ENCODE measurements at regions of chr6 and their contacts with region 1.

Region 1: GRCh38 chr6:138115877-138116660 is 8.8 kb upstream of the PERP start:
- DNase-seq: no peak
- H3K4me3 Mint-ChIP-seq: no peak overlapping the region
- H3K27ac Mint-ChIP-seq: no peak overlapping the region
- H3K4me1 Mint-ChIP-seq: peaks cover 6% of the 10 kb centered on the region
- H3K27me3 Mint-ChIP-seq: peaks cover 38% of the 10 kb centered on the region

Region 2: DNA sequence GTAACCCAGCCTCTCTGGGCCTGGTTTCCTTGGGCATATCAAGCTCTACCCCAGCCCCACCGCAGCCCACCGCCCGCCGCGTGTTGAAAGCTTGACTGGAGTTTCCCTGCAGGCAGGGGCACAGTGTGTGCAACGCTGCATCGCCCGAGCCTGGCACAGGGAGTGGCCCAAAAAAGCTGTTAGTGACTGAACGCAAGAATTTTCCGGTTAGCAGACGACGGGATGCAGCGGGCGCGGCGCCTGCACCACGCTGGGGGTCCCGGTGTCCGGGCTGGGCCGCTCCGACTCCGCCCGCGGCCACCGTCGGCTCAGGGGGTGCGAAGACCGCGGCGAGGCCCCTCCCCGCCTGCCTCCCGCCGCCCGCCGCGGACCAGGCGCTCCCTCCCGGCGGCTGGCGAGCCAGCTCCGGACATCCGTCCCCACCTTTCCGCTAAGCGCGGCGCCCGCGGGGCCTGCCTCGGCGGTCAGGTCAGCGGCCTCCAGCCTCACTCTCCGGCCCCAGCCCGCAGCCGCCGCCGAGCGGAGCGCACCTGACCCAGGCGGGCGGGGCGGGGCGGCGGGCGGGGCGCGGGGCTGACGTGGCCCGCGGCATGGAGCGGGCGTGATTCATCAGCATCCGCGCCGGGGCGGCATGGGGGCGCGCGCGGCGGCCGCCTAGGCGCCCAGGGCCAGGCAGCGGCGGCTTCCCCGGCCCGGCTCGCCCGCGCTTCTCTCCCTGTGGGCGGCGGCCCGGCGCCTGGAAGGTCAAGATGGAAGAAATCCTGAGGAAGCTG is 45.5 kb after region 1 on chr6 and contains the start of gene ARFGEF3:
- intact Hi-C with region 1: loop called (anchors 2 kb)
- DNase-seq: peak; percentile 28
- H3K4me3 Mint-ChIP-seq: peak within 1 kb of the TSS; percentile 62
- H3K27ac Mint-ChIP-seq: no peak within 1 kb of the TSS
- H3K4me1 Mint-ChIP-seq: peaks cover 12% of the 10 kb centered on the region
- H3K27me3 Mint-ChIP-seq: peaks cover 58% of the 10 kb centered on the region
- total RNA-seq, gene ARFGEF3: 0.48 and 0.55 TPM in 2 replicates

Region 3: GRCh38 chr6:138287144-138287955 is 171.3 kb after region 1 on chr6:
- intact Hi-C with region 1: loop called (anchors 1 kb)
- DNase-seq: no peak
- H3K4me3 Mint-ChIP-seq: no peak overlapping the region
- H3K27ac Mint-ChIP-seq: no peak overlapping the region
- H3K4me1 Mint-ChIP-seq: peaks cover 1% of the 10 kb centered on the region
- H3K27me3 Mint-ChIP-seq: no peaks in the 10 kb centered on the region

Region 4: GRCh38 chr6:138403801-138404661 is 288.0 kb after region 1 on chr6 and contains the start of gene HEBP2:
- intact Hi-C with region 1: loop called (anchors 10 kb)
- DNase-seq: peak; percentile 84
- H3K4me3 Mint-ChIP-seq: peak within 1 kb of the TSS; percentile 77
- H3K27ac Mint-ChIP-seq: peak within 1 kb of the TSS; percentile 26
- H3K4me1 Mint-ChIP-seq: peaks cover 18% of the 10 kb centered on the region
- H3K27me3 Mint-ChIP-seq: peaks cover 13% of the 10 kb centered on the region
- total RNA-seq, gene HEBP2: 17.2 and 20.0 TPM in 2 replicates

Region 5: DNA sequence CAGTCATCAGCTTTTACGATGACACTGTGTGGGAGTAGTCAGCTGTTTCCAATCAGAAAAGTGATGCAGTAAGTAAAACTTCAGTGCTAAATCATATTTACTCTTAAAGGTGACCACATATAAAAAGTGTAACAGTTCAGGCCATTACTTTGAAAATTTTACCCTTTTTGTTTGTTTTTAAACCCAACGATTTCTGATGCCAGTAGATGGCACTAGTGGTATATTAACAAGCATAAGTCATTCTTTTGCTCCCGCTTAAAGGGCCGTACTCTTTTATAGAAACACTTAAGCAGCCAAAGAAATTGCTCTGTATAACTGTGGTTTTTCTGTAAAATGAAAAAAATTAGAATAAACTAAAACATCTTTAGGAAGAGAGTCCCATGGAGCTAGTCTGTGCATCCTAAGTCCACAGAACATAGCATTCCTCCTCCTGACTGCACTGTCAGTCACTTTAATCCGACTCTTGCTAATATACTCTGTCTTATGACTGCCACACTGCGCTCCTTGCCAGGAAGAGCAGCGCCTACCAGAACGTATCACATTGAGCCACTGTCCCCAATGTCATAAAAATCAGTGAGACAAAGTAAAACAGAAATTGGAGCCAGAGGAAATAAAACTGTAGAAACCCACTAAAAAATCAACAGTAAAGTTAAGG is 313.0 kb after region 1 on chr6:
- intact Hi-C with region 1: loop called (anchors 2 kb)
- DNase-seq: no peak
- H3K4me3 Mint-ChIP-seq: no peak overlapping the region
- H3K27ac Mint-ChIP-seq: no peak overlapping the region
- H3K4me1 Mint-ChIP-seq: no peaks in the 10 kb centered on the region
- H3K27me3 Mint-ChIP-seq: peaks cover 3% of the 10 kb centered on the region

Region 6: GRCh38 chr6:138517635-138518034 is 401.6 kb after region 1 on chr6:
- intact Hi-C with region 1: loop called (anchors 2 kb)
- DNase-seq: peak; percentile 42
- H3K4me3 Mint-ChIP-seq: no peak overlapping the region
- H3K27ac Mint-ChIP-seq: no peak overlapping the region
- H3K4me1 Mint-ChIP-seq: peaks cover 22% of the 10 kb centered on the region
- H3K27me3 Mint-ChIP-seq: peaks cover 13% of the 10 kb centered on the region

Region 7: GRCh38 chr6:138765896-138766655 is 650.0 kb after region 1 on chr6:
- intact Hi-C with region 1: loop called (anchors 5 kb)
- DNase-seq: no peak
- H3K4me3 Mint-ChIP-seq: no peak overlapping the region
- H3K27ac Mint-ChIP-seq: no peak overlapping the region
- H3K4me1 Mint-ChIP-seq: peaks cover 5% of the 10 kb centered on the region
- H3K27me3 Mint-ChIP-seq: no peaks in the 10 kb centered on the region